ENCODE measurements at regions of chr4 and their contacts with region 1.

Region 1: GRCh38 chr4:165207431-165208220 is at the start of gene KLHL2:
- DNase-seq: peak; percentile 95
- ATAC-seq: peak; percentile 97
- total RNA-seq, gene KLHL2: 10.6 TPM

Region 2: GRCh38 chr4:165112368-165113139 is 95.1 kb before region 1 on chr4 and contains the start of gene TMEM192:
- intact Hi-C with region 1: loop called (anchors 10 kb)
- DNase-seq: peak; percentile 96
- ATAC-seq: peak; percentile 100
- total RNA-seq, gene TMEM192: 14.9 TPM

Region 3: GRCh38 chr4:165327211-165328100 is 119.8 kb after region 1 on chr4 and contains the start of gene MSMO1:
- intact Hi-C with region 1: loop called (anchors 2 kb)
- DNase-seq: peak; percentile 100
- ATAC-seq: peak; percentile 100
- total RNA-seq, gene MSMO1: 8.5 TPM

Measured in Right ventricle myocardium inferior (tissue), 1 donor.